CD4-positive, alpha-beta memory T cell (primary cell): ENCODE measurements at regions of chr9 and their contacts with region 1.

Region 1: GRCh38 chr9:83920927-83921707 is at the start of gene KIF27:
- DNase-seq: peak; percentile 93 to 95 (median 94)
- H3K4me3 ChIP-seq: peak within 1 kb of the TSS; percentile 20 to 67
- H3K4me3 Mint-ChIP-seq: peak within 1 kb of the TSS; percentile 90 to 95 (median 92)
- H3K27ac ChIP-seq: peak within 1 kb of the TSS; percentile 83
- H3K27ac Mint-ChIP-seq: peak within 1 kb of the TSS; percentile 84 to 98 (median 97)
- H3K4me1 ChIP-seq: peaks cover 11% of the 10 kb centered on the region
- H3K4me1 Mint-ChIP-seq: peaks cover 8 to 18% (median 10%) of the 10 kb centered on the region in 4 donors
- H3K27me3 ChIP-seq: no peaks in the 10 kb centered on the region
- H3K27me3 Mint-ChIP-seq: no peaks in the 10 kb centered on the region
- total RNA-seq, gene KIF27: 4.7 to 5.2 TPM

Region 2: DNA sequence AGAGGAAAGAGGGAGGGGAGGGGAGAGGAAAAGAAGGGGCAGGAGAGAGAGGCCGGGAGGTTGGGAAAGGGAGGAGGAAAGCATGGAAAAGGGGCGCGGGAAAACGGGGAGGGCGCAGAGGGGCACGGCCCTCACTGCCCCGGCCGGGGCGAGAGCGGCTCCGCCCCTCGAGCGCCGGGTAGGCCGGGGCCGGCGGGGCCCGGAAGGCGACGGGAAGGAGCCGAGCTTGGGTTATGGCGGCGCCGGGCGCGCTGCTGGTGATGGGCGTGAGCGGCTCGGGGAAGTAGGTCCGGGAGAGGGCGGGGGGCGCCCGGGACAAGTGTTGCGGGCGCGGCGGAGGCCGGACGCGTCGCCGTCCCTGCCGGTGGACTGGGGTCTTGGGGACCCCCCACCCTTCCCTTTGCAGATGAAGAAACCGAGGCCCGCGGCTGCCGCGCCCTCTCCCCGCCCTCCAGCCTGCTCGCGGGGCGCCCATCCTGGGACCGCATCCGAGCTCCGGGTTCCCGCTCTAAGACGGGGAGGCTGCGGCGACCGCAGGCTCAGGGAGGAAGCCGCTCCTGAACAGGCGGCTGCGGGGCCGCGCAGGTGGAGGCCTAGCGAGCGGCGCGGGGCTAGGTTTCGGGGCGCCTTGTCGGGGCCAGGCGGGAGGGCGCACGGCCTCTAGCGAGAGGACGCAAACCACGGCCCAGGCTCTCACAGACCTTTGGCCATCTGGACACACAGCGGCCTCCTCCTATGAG is 298.0 kb before region 1 on chr9 and contains the start of gene IDNK:
- CTCF ChIA-PET with region 1: interaction called, 27 read pairs
- POLR2A ChIA-PET with region 1: interaction called, 28 read pairs
- intact Hi-C with region 1: loop called (anchors 2 kb)
- DNase-seq: peak; percentile 66 to 72 (median 69)
- H3K4me3 ChIP-seq: peak within 1 kb of the TSS; percentile 30 to 63
- H3K4me3 Mint-ChIP-seq: peak within 1 kb of the TSS; percentile 92 to 99 (median 95)
- H3K27ac ChIP-seq: peak within 1 kb of the TSS; percentile 82
- H3K27ac Mint-ChIP-seq: peak within 1 kb of the TSS; percentile 85 to 97 (median 94)
- H3K4me1 ChIP-seq: peaks cover 24% of the 10 kb centered on the region
- H3K4me1 Mint-ChIP-seq: peaks cover 21 to 41% (median 33%) of the 10 kb centered on the region in 4 donors
- H3K27me3 ChIP-seq: no peaks in the 10 kb centered on the region
- H3K27me3 Mint-ChIP-seq: no peaks in the 10 kb centered on the region
- total RNA-seq, gene IDNK: 10.1 to 10.2 TPM

Region 3: DNA sequence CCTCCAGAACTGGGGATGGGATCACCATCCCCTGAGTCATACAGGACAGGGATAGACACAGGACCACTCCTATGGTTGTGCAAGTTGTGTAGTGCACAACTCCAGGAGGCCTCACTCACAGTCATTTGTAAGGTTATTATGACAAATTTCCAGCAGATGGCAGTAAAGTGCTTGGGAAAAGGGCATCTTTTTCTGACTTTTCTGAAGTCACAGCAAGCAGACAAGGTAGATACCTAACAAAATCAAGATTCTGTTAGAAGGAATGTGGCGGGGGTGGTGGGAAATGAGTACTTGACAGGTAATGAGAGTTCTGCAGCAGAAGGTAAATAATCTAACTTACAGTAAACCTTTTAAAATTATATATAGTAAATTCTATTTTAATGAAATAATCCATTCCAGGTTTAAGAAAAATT is 16.8 kb after region 1 on chr9:
- CTCF ChIA-PET with region 1: interaction called, 10 read pairs
- POLR2A ChIA-PET with region 1: no interaction called
- intact Hi-C with region 1: no loop called
- DNase-seq: peak; percentile 47 to 72 (median 67)
- H3K4me3 ChIP-seq: no peak overlapping the region
- H3K4me3 Mint-ChIP-seq: peak overlapping the region in 1 of 8 donors; percentile 2
- H3K27ac ChIP-seq: no peak overlapping the region
- H3K27ac Mint-ChIP-seq: no peak overlapping the region
- H3K4me1 ChIP-seq: no peaks in the 10 kb centered on the region
- H3K4me1 Mint-ChIP-seq: no peaks in the 10 kb centered on the region
- H3K27me3 ChIP-seq: no peaks in the 10 kb centered on the region
- H3K27me3 Mint-ChIP-seq: no peaks in the 10 kb centered on the region

Region 4: DNA sequence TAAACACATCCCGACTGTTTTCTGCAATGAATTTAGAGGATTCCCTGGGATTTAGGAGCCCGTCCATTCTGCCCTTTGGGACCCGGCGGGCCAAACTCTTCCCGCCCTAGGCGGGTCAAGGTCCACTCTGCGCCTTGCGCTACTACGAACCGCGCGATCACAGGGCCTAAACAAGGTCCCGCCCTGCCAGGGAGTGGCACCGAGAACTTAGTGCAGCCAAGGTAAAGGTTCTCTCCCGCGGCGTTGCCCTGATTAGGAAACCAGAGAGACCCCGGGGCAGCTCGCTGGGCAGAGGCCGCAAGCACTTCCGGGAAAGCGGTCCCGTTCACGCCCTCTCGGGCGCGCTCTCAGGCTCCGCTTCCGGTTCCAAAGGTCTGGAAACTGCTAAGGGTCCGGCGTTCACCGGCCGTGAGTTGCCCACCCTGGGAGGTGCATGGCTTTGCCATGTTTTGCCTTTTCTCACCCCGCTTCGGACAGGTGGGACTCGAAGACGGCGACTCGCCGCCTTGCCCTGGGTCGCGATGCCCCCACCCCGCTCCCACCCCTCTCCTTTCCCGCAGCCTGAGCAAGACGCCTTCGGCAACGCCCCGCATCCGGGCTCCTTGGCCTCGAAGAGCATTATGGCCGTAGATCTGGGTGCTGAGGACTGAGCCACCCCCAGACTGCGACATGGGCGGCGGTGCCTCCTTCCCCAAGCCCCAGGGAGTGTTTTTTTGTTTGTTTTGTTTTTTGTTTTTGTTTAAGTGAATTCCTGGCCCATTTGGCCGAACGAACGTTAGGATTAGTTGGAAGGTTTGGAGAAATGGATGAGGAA is 35.5 kb after region 1 on chr9:
- CTCF ChIA-PET with region 1: interaction called, 3 read pairs
- POLR2A ChIA-PET with region 1: interaction called, 16 read pairs
- intact Hi-C with region 1: loop called (anchors 2 kb)
- DNase-seq: peak; percentile 38 to 60 (median 41)
- H3K4me3 ChIP-seq: peak overlapping the region; percentile 83 to 98
- H3K4me3 Mint-ChIP-seq: peak overlapping the region; percentile 94 to 98 (median 98)
- H3K27ac ChIP-seq: peak overlapping the region; percentile 71
- H3K27ac Mint-ChIP-seq: peak overlapping the region; percentile 83 to 97 (median 92)
- H3K4me1 ChIP-seq: peaks cover 21% of the 10 kb centered on the region
- H3K4me1 Mint-ChIP-seq: peaks cover 11 to 26% (median 17%) of the 10 kb centered on the region in 4 donors
- H3K27me3 ChIP-seq: no peaks in the 10 kb centered on the region
- H3K27me3 Mint-ChIP-seq: no peaks in the 10 kb centered on the region

Region 5: DNA sequence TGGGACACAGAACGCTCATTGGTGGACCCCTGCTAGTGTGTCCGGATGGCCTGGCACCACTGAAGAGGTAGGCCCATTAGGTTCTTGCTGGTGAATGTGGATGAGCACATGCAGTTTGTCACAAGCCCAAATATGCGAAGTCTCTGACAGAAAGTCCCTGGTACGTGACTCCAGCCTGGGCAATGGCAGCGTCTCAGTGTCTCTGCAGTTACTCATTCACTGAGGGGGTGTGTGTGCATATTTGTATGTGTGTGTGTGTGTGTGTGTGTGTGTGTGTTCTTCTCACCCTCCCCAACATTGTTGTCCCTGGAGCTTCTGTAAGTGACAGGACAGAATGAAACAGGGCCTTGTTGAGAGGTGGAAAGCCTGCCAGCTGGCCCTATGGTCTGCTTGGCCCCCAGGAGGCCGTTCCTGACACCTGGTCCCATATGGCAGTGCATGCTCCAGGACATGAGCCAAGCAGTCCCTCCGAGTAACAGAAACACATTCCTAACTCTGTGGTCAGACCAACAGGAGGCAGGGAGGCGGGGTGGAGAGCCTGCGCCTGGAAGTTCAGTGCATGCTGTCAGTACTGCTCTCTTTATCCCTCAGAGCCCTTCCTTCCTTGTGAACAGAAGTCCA is 249.5 kb after region 1 on chr9:
- CTCF ChIA-PET with region 1: interaction called, 11 read pairs
- POLR2A ChIA-PET with region 1: no interaction called
- intact Hi-C with region 1: loop called (anchors 5 kb)
- DNase-seq: no peak
- H3K4me3 ChIP-seq: no peak overlapping the region
- H3K4me3 Mint-ChIP-seq: no peak overlapping the region
- H3K27ac ChIP-seq: no peak overlapping the region
- H3K27ac Mint-ChIP-seq: no peak overlapping the region
- H3K4me1 ChIP-seq: no peaks in the 10 kb centered on the region
- H3K4me1 Mint-ChIP-seq: no peaks in the 10 kb centered on the region
- H3K27me3 ChIP-seq: no peaks in the 10 kb centered on the region
- H3K27me3 Mint-ChIP-seq: peaks cover 3% of the 10 kb centered on the region in 2 donors

Region 6: DNA sequence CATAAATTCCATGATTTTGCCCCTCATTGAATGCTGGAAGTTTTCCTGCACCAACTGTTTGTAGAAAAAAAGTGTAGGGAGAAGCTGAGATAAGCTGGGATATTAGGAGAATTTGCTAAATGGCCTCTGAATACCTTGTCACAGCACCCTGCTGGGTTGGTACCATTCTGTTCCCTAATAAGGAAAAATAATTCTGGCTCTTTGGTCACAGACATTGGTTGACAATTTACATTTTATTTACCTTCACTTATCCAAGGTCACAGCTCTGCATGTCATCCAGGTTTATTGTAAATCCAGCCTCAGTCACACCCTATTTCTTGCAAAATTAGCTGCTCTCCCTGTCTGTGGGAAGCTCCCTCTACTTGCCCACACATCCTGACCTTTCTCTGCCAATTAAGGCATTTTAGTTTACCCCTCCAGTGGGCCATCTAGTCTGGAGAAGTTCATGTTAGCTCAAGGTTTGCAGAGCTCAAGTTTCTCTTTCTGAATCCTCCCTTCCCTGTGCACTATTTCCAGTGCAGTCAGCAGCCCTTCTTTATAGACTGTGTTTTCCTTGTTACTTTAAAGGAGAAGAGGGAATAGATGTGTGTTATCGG is 633.0 kb after region 1 on chr9:
- CTCF ChIA-PET with region 1: no interaction called
- POLR2A ChIA-PET with region 1: no interaction called
- intact Hi-C with region 1: no loop called
- DNase-seq: no peak
- H3K4me3 ChIP-seq: no peak overlapping the region
- H3K4me3 Mint-ChIP-seq: no peak overlapping the region
- H3K27ac ChIP-seq: no peak overlapping the region
- H3K27ac Mint-ChIP-seq: no peak overlapping the region
- H3K4me1 ChIP-seq: no peaks in the 10 kb centered on the region
- H3K4me1 Mint-ChIP-seq: no peaks in the 10 kb centered on the region
- H3K27me3 ChIP-seq: no peaks in the 10 kb centered on the region
- H3K27me3 Mint-ChIP-seq: peaks cover 2 to 4% of the 10 kb centered on the region in 2 donors